ENCODE measurements at regions of chr10 and their contacts with region 1.

Region 1: GRCh38 chr10:98170249-98171117 is 36.0 kb downstream of the R3HCC1L start:
- DNase-seq: peak; percentile 43
- H3K4me3 Mint-ChIP-seq: no peak overlapping the region
- H3K27ac Mint-ChIP-seq: no peak overlapping the region
- H3K4me1 Mint-ChIP-seq: peaks cover under 1% of the 10 kb centered on the region
- H3K27me3 Mint-ChIP-seq: no peaks in the 10 kb centered on the region

Region 2: DNA sequence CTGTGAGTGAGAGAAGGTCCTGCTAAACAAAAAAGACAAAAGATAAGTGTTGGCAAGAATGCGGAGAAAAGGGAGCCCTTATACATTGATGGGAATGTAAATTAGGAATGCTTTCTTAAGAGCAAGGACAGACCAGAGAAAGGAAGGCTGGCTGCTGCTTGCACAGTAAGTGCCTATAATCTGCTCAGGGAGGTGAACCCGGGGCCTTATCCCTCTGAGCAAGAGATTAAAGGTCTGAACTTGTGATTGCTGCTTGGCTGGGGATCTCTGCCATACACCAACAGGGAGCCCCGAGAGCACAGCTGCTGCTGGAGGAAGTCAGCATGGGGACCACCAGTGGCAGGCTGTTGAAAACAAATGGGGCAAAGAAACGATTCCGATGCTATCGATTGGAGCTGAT is 108.1 kb before region 1 on chr10:
- CTCF ChIA-PET with region 1: no interaction called
- DNase-seq: no peak
- H3K4me3 Mint-ChIP-seq: no peak overlapping the region
- H3K27ac Mint-ChIP-seq: no peak overlapping the region
- H3K4me1 Mint-ChIP-seq: no peaks in the 10 kb centered on the region
- H3K27me3 Mint-ChIP-seq: peaks cover 19% of the 10 kb centered on the region

Region 3: DNA sequence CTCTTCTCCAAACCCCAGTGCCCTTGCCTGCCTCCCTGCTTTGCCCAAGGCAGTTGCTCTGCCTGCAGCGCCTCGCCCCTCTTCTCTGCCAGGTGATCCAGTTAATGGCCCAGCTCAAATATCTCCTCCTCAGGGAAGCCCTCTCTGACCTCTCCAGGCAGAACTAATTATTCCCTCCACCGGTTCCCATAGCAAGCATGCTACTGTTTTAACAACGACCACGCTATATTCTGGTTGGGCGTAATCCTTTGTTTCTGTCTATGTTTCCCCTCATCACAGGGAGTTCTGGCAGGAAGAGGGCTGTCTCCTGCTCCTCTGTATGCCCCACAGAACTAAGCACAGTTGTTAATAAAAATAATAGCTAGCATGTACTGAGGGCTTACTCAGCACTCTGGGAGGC is 72.9 kb before region 1 on chr10:
- CTCF ChIA-PET with region 1: no interaction called
- DNase-seq: no peak
- H3K4me3 Mint-ChIP-seq: no peak overlapping the region
- H3K27ac Mint-ChIP-seq: no peak overlapping the region
- H3K4me1 Mint-ChIP-seq: no peaks in the 10 kb centered on the region
- H3K27me3 Mint-ChIP-seq: peaks cover 6% of the 10 kb centered on the region

Region 4: GRCh38 chr10:98186681-98187080 is 16.2 kb after region 1 on chr10:
- CTCF ChIA-PET with region 1: interaction called, 11 read pairs
- DNase-seq: no peak
- H3K4me3 Mint-ChIP-seq: no peak overlapping the region
- H3K27ac Mint-ChIP-seq: no peak overlapping the region
- H3K4me1 Mint-ChIP-seq: peaks cover 14% of the 10 kb centered on the region
- H3K27me3 Mint-ChIP-seq: no peaks in the 10 kb centered on the region

Region 5: DNA sequence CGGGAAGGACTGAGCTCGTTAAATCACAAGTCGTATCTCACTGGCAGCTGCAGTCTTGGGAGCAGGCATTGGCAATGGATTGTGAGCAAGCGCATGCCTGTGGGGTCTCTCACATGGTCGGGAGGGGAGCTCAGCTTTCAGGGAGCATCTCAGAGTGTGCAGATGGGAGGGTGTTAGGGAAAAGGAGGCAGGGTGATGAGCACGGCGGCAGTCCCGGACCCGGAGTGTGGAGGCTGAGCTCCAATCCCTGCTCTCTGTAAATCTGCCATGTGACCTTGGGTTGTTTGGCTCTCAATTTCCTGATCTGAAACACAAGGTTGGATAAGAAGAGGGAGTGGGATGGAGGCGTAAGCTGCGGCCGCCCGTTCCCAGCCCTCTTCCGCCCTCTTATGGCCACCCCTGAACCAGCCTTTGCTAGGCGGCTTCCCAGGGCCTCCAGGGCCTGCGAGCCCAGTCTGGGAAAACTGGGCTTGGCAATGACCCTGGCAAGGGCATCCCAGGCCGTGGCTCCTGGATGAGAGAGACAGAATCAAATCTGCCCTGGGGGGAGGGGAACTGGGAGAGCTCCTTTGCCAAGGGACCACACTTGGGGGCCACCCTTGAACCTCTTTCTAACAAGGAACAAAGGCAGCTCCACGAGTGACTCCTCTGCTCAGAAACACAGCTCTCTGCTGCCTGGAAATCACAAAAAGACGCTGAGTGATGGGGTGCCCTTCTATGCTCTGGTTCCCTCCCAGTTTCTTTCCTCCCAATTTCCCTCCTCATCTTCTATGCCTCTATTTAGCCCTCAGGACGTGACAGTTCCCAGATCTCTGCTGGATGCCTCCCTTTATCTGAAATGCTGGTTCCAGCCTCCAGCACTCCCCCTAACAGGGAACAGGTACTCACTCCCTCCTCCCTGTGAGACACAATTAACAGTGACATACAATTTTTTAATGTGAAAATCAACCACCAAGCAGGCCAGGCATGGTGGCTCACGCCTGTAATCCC is 139.2 kb after region 1 on chr10:
- CTCF ChIA-PET with region 1: interaction called, 33 read pairs
- DNase-seq: peak; percentile 31
- H3K4me3 Mint-ChIP-seq: no peak overlapping the region
- H3K27ac Mint-ChIP-seq: no peak overlapping the region
- H3K4me1 Mint-ChIP-seq: no peaks in the 10 kb centered on the region
- H3K27me3 Mint-ChIP-seq: peaks cover 47% of the 10 kb centered on the region

Region 6: GRCh38 chr10:98323221-98324164 is 153.0 kb after region 1 on chr10:
- CTCF ChIA-PET with region 1: no interaction called
- DNase-seq: no peak
- H3K4me3 Mint-ChIP-seq: no peak overlapping the region
- H3K27ac Mint-ChIP-seq: no peak overlapping the region
- H3K4me1 Mint-ChIP-seq: no peaks in the 10 kb centered on the region
- H3K27me3 Mint-ChIP-seq: peaks cover 40% of the 10 kb centered on the region

Measured in activated naive CD4-positive, alpha-beta T cell treated with anti-CD3 and anti-CD28 coated beads, Interleukin-2, amount 10 ng/mL, durations not matched to agents 7 days and 5 days (primary cell).